ENCODE measurements at regions of chr19 and their contacts with region 1.

Region 1: DNA sequence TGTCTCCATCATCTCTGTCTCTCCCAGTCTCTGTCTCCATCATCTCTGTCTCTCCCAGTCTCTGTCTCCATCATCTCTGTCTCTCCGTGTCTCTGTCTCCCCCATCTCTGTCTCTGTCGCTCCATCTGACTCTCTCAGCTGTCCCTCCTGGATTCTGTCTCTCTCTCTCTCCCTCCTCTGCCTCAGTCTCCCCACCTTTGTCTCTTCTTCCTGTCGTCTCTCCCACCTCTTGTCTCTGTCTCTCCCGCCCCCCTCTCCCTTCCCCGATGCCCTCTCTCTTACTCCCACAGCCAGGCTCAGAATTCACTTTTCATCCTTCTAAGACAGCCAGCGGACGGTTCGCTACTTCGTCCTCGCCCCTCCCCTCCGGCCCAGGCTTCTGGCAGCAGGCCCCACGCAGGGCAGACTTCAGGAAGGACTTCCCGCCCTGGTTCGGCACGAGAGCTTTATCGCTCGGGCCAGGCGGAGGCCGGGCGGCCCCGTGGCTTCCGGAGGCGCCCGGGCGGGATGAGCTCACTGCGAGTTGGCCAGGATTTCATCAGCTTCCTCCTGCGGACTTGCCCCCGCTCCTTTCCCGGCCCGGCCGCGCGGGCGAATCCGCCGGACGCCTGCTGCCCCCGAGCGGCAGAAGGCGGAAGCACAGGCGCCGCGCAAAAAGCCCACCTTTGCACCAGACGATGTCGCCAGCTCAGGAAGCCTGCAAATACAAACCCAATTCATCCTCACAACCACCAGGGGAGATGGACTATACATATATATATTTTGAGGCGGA is 12.4 kb upstream of the CCDC9 start:
- DNase-seq: peak; percentile 91
- H3K4me3 ChIP-seq: peak overlapping the region; percentile 37 to 57
- H3K27ac ChIP-seq: peak overlapping the region; percentile 68 to 84
- H3K4me1 ChIP-seq: peaks cover 12 to 36% of the 10 kb centered on the region in 2 experiments; a peak in 3 of 4 replicates
- H3K27me3 ChIP-seq: no peaks in the 10 kb centered on the region
- CTCF ChIP-seq: peak; percentile 97
- EP300 ChIP-seq: peak in 1 of 2 experiments; percentile 68; a peak in 1 of 4 replicates
- RAD21 ChIP-seq: peak; percentile 94

Region 2: GRCh38 chr19:47081111-47081510 is 162.9 kb before region 1 on chr19:
- CTCF ChIA-PET with region 1: interaction called, 20 read pairs
- POLR2A ChIA-PET with region 1: no interaction called
- DNase-seq: no peak
- H3K4me3 ChIP-seq: no peak overlapping the region
- H3K27ac ChIP-seq: no peak overlapping the region
- H3K4me1 ChIP-seq: 0 out of 4 replicates have a peak, but pooled peaks cover 0 to 5% of the 10 kb centered on the region in 2 experiments
- H3K27me3 ChIP-seq: no peaks in the 10 kb centered on the region
- CTCF ChIP-seq: no peak
- EP300 ChIP-seq: no peak
- RAD21 ChIP-seq: no peak

Region 3: GRCh38 chr19:47143322-47144073 is 100.5 kb before region 1 on chr19:
- CTCF ChIA-PET with region 1: interaction called, 132 read pairs
- POLR2A ChIA-PET with region 1: no interaction called
- DNase-seq: no peak
- H3K4me3 ChIP-seq: no peak overlapping the region
- H3K27ac ChIP-seq: no peak overlapping the region
- H3K4me1 ChIP-seq: peaks cover 0 to 12% of the 10 kb centered on the region in 2 experiments; a peak in 1 of 4 replicates
- H3K27me3 ChIP-seq: no peaks in the 10 kb centered on the region
- CTCF ChIP-seq: no peak
- EP300 ChIP-seq: no peak
- RAD21 ChIP-seq: no peak

Region 4: DNA sequence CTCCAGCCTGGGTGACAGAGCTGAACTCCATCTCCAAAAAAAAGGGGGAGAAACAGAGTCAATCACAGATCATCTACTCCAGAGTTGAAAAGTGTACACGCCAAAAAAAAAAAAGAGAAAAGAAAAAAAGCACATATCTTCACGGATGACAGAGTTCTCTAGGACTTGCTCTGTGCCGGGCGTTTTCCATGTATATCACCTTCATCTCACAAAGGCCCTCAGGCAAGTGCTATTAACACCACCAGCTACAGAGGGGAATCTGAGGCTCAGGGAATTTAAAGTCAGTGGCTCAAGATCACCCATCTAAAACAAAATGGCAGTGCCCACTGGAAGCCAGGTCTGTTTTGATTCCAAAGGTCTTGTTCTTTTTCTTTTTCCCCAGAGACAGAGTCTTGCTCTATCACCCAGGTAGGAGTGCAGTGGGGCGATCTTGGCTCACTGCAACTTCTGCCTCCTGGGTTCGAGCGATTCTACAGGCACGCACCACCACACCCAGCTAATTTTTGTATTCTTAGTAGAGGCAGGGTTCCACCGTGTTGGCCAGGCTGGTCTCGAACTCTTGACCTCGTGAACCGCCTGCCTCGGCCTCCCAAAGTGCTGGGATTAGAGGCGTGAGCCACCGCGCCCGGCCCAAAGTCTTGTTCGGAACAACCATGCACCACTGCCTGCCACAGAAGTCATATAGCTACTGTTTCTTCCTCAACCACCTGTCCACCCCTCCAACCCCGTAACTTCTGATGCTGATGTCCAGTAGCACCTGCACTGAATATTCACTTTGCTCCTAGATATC is 71.1 kb before region 1 on chr19:
- CTCF ChIA-PET with region 1: interaction called, 14 read pairs
- POLR2A ChIA-PET with region 1: no interaction called
- DNase-seq: no peak
- H3K4me3 ChIP-seq: no peak overlapping the region
- H3K27ac ChIP-seq: peak overlapping the region in 1 of 2 experiments; percentile 28; a peak in 1 of 4 replicates
- H3K4me1 ChIP-seq: peaks cover 0 to 15% of the 10 kb centered on the region in 2 experiments; a peak in 3 of 4 replicates
- H3K27me3 ChIP-seq: no peaks in the 10 kb centered on the region
- CTCF ChIP-seq: no peak
- EP300 ChIP-seq: no peak
- RAD21 ChIP-seq: no peak

Region 5: GRCh38 chr19:47225746-47226425 is 18.1 kb before region 1 on chr19:
- CTCF ChIA-PET with region 1: interaction called, 520 read pairs
- POLR2A ChIA-PET with region 1: interaction called, 65 read pairs
- DNase-seq: peak; percentile 99
- H3K4me3 ChIP-seq: peak overlapping the region; percentile 49 to 93; a peak in 3 of 4 replicates
- H3K27ac ChIP-seq: peak overlapping the region; percentile 90 to 92
- H3K4me1 ChIP-seq: peaks cover 20 to 26% of the 10 kb centered on the region in 2 experiments; a peak in 3 of 4 replicates
- H3K27me3 ChIP-seq: no peaks in the 10 kb centered on the region
- CTCF ChIP-seq: peak; percentile 14; the same call in 1 of the 2 replicates
- EP300 ChIP-seq: peak in 1 of 2 experiments; percentile 35; a peak in 1 of 4 replicates
- RAD21 ChIP-seq: no peak

Region 6: GRCh38 chr19:47273313-47273977 is 29.5 kb after region 1 on chr19:
- CTCF ChIA-PET with region 1: interaction called, 12 read pairs
- POLR2A ChIA-PET with region 1: no interaction called
- DNase-seq: peak; percentile 98
- H3K4me3 ChIP-seq: peak overlapping the region; percentile 59 to 87
- H3K27ac ChIP-seq: peak overlapping the region; percentile 84 to 97
- H3K4me1 ChIP-seq: peaks cover 10 to 18% of the 10 kb centered on the region in 2 experiments; a peak in 3 of 4 replicates
- H3K27me3 ChIP-seq: no peaks in the 10 kb centered on the region
- CTCF ChIP-seq: no peak
- EP300 ChIP-seq: no peak
- RAD21 ChIP-seq: peak; percentile 13; the same call in 1 of the 2 replicates

Region 7: GRCh38 chr19:47305309-47305751 is 61.4 kb after region 1 on chr19:
- CTCF ChIA-PET with region 1: no interaction called
- POLR2A ChIA-PET with region 1: no interaction called
- DNase-seq: peak; percentile 81
- H3K4me3 ChIP-seq: peak overlapping the region in 1 of 2 experiments; percentile 42; a peak in 1 of 4 replicates
- H3K27ac ChIP-seq: no peak overlapping the region
- H3K4me1 ChIP-seq: no peaks in the 10 kb centered on the region; a peak in 1 of 4 replicates
- H3K27me3 ChIP-seq: peaks cover 12% of the 10 kb centered on the region
- CTCF ChIP-seq: peak; percentile 99
- EP300 ChIP-seq: no peak
- RAD21 ChIP-seq: peak; percentile 54